GM10248 (cell line): ENCODE measurements at regions of chr16 and their contacts with region 1.

Region 1: GRCh38 chr16:87636072-87636684 is 33.9 kb downstream of the JPH3 start:
- DNase-seq: peak; percentile 85
- CTCF ChIP-seq: peak; percentile 46

Region 2: GRCh38 chr16:87416826-87417527 is 219.2 kb before region 1 on chr16:
- CTCF ChIA-PET with region 1: interaction called, 12 read pairs
- POLR2A ChIA-PET with region 1: no interaction called
- DNase-seq: no peak
- CTCF ChIP-seq: peak; percentile 53

Region 3: GRCh38 chr16:87464691-87465300 is 171.4 kb before region 1 on chr16:
- CTCF ChIA-PET with region 1: interaction called, 10 read pairs
- POLR2A ChIA-PET with region 1: no interaction called
- DNase-seq: peak; percentile 60
- CTCF ChIP-seq: no peak